HCT116 (cell line): ENCODE measurements at regions of chr20 and their contacts with region 1.

Region 1: DNA sequence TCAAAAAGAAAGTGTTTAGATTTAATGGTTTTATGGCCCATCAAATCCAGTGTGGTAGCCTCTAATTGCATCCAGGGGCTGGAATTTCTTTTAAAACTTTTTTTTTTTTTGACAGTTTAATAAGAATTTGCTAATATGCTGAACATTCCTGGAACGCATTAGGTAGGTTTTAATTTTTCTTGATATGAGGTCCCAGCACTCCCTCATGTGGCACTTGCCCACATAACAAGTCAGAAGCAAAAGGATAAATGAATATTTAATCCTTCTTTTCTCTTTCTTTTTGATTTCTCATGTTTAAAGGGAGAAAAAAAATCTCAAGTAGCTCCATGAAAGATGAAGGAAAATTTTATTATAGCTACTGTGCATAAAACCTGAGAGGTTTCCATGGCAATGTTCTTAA is 13.5 kb downstream of the HAO1 start:
- DNase-seq: peak; percentile 12
- ATAC-seq: no peak
- H3K4me3 ChIP-seq: no peak overlapping the region
- H3K27ac ChIP-seq: no peak overlapping the region
- H3K4me1 ChIP-seq: no peaks in the 10 kb centered on the region
- H3K27me3 ChIP-seq: peaks cover 5% of the 10 kb centered on the region; the same call in 1 of the 2 replicates
- CTCF ChIP-seq: peak in 2 of 3 experiments; percentile 44 to 62; a peak in 4 of 6 replicates
- POLR2A ChIP-seq: no peak
- RAD21 ChIP-seq: peak; percentile 57; the same call in 1 of the 2 replicates

Region 2: DNA sequence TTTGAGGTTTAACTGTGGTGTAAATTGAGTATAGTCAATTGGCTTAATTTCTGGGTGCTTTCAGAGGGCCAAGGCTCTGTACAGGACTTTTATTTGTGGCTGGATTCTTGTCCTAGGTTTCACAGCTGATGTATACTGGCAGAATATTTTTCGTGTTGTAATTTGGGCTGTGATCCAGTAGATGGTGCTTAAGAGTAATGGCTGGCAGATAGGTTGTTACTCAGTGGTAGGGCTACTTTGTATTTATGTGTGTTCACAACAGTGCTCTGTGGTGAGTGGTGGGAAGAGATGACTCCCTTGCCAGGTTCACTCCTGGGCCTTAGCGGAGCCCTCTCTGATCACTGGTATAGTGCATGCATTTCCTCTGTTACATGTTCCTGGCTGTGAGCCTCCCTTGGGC is 1769.4 kb before region 1 on chr20:
- CTCF ChIA-PET with region 1: interaction called, 4 read pairs
- POLR2A ChIA-PET with region 1: no interaction called
- RAD21 ChIA-PET with region 1: no interaction called
- intact Hi-C with region 1: loop called (anchors 5 kb)
- DNase-seq: no peak
- ATAC-seq: peak; percentile 86
- H3K4me3 ChIP-seq: no peak overlapping the region
- H3K27ac ChIP-seq: no peak overlapping the region
- H3K4me1 ChIP-seq: no peaks in the 10 kb centered on the region
- H3K27me3 ChIP-seq: 0 out of 2 replicates have a peak, but pooled peaks cover 8% of the 10 kb centered on the region
- CTCF ChIP-seq: peak; percentile 21 to 66 (median 63); a peak in 5 of 6 replicates
- POLR2A ChIP-seq: no peak
- RAD21 ChIP-seq: peak; percentile 42; the same call in 1 of the 2 replicates

Region 3: GRCh38 chr20:7195704-7196103 is 731.1 kb before region 1 on chr20:
- CTCF ChIA-PET with region 1: no interaction called
- POLR2A ChIA-PET with region 1: no interaction called
- RAD21 ChIA-PET with region 1: no interaction called
- intact Hi-C with region 1: no loop called
- DNase-seq: no peak
- ATAC-seq: no peak
- H3K4me3 ChIP-seq: no peak overlapping the region
- H3K27ac ChIP-seq: no peak overlapping the region
- H3K4me1 ChIP-seq: no peaks in the 10 kb centered on the region
- H3K27me3 ChIP-seq: no peaks in the 10 kb centered on the region
- CTCF ChIP-seq: no peak
- POLR2A ChIP-seq: no peak
- RAD21 ChIP-seq: no peak

Region 4: GRCh38 chr20:8104252-8104651 is 177.5 kb after region 1 on chr20:
- CTCF ChIA-PET with region 1: no interaction called
- POLR2A ChIA-PET with region 1: no interaction called
- RAD21 ChIA-PET with region 1: no interaction called
- intact Hi-C with region 1: no loop called
- DNase-seq: no peak
- ATAC-seq: no peak
- H3K4me3 ChIP-seq: no peak overlapping the region
- H3K27ac ChIP-seq: no peak overlapping the region
- H3K4me1 ChIP-seq: no peaks in the 10 kb centered on the region
- H3K27me3 ChIP-seq: no peaks in the 10 kb centered on the region
- CTCF ChIP-seq: no peak
- POLR2A ChIP-seq: no peak
- RAD21 ChIP-seq: no peak